Dendritic cell treated with granulocyte-macrophage colony-stimulating factor and Interleukin-4, amounts not matched to agents 40 ng/mL and 50 ng/mL, for 4 days (primary cell): ENCODE measurements at regions of chr14 and their contacts with region 1.

Region 1: DNA sequence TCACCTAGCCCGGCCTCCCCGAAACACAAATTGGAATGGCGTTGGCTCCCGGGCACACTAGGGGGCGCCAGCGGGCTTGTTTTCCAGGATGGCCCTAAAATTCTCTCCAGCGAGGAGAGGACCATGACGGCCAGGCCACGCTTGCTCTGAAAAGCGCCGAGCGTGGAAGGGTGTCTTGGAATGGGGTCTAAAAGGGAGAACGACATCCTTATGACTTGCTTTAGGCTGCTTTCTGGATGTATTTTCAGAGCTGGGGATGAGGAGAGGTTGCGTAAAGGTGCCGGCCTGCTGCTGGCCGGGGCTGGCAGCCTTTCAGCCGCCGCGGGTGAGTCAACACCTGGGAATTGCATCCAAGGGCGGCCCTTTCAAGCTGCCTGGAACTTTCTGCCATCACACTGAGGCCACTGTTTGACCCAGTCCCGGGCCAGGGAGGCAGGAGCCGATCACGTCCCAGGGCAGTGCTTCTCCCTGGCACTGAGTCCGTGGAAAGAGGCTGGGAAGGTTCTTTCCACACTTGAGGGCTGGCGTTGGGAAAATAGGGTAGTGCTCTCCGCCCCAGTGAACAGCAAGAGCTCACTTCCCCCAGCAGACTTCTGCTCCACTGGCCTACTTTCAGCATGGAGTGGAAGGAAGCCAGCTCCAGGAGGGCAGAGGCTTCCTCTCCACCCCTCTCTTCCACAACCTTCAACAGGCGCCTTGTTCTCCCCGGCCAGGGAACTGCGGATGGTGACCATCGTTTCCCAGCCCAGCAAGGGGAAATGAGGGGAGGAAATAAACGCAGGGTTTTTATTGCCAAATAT is 216.2 kb downstream of the TTC8 start:
- H3K4me3 Mint-ChIP-seq: peak overlapping the region; percentile 78
- H3K27ac Mint-ChIP-seq: peak overlapping the region; percentile 76
- H3K4me1 Mint-ChIP-seq: peaks cover 20% of the 10 kb centered on the region
- H3K27me3 Mint-ChIP-seq: peaks cover 32% of the 10 kb centered on the region

Region 2: GRCh38 chr14:89178802-89179535 is 138.3 kb after region 1 on chr14:
- intact Hi-C with region 1: loop called (anchors 10 kb)
- H3K4me3 Mint-ChIP-seq: no peak overlapping the region
- H3K27ac Mint-ChIP-seq: no peak overlapping the region
- H3K4me1 Mint-ChIP-seq: peaks cover 15% of the 10 kb centered on the region
- H3K27me3 Mint-ChIP-seq: no peaks in the 10 kb centered on the region

Region 3: GRCh38 chr14:89618811-89619551 is 578.3 kb after region 1 on chr14:
- intact Hi-C with region 1: loop called (anchors 5 kb)
- H3K4me3 Mint-ChIP-seq: peak overlapping the region; percentile 83
- H3K27ac Mint-ChIP-seq: peak overlapping the region; percentile 80
- H3K4me1 Mint-ChIP-seq: peaks cover 46% of the 10 kb centered on the region
- H3K27me3 Mint-ChIP-seq: peaks cover 3% of the 10 kb centered on the region

Region 4: GRCh38 chr14:89767861-89768268 is 727.2 kb after region 1 on chr14:
- intact Hi-C with region 1: loop called (anchors 5 kb)
- H3K4me3 Mint-ChIP-seq: no peak overlapping the region
- H3K27ac Mint-ChIP-seq: peak overlapping the region; percentile 47
- H3K4me1 Mint-ChIP-seq: peaks cover 32% of the 10 kb centered on the region
- H3K27me3 Mint-ChIP-seq: peaks cover 6% of the 10 kb centered on the region